Activated B cell treated with CpG ODN at 0.5 μM for 24 hours (primary cell): ENCODE measurements at regions of chr13 and their contacts with region 1.

Region 1: DNA sequence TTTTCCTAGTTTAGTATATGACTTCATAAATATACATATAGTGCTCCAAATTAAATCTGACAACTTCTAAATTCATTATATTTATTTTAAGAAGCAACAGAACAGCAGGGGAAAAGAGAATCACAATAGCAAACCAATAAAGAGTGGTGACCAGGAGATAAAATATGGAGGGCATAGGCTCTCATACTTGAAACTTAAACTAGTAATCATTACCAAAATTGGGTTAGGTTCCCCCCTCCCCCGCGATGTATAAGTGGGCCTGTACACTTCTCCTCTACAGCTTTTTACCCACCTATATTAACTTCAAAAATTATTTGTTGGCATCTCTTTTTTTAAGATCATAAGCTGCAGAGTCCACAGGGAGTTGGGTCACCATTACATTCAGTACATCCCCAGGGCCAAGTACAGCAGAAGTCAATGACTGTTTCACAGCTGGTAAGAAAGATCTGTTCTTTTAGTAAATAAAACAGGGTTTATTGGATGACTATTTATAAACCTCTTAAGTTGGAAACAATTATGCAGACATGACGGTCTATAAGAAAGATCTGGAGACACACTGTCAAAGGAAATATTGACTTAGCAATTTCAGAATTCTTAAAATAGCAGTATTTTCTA is 29.4 kb downstream of the KLF12 start:
- DNase-seq: no peak
- ATAC-seq: peak; percentile 58
- H3K4me3 Mint-ChIP-seq: no peak overlapping the region
- H3K27ac Mint-ChIP-seq: no peak overlapping the region
- H3K4me1 Mint-ChIP-seq: peaks cover 49% of the 10 kb centered on the region
- H3K27me3 Mint-ChIP-seq: no peaks in the 10 kb centered on the region
- CTCF ChIP-seq: no peak

Region 2: GRCh38 chr13:73898276-73898675 is 206.5 kb before region 1 on chr13:
- CTCF ChIA-PET with region 1: no interaction called
- POLR2A ChIA-PET with region 1: no interaction called
- intact Hi-C with region 1: no loop called
- DNase-seq: no peak
- ATAC-seq: peak; percentile 34
- H3K4me3 Mint-ChIP-seq: no peak overlapping the region
- H3K27ac Mint-ChIP-seq: no peak overlapping the region
- H3K4me1 Mint-ChIP-seq: peaks cover 39% of the 10 kb centered on the region
- H3K27me3 Mint-ChIP-seq: no peaks in the 10 kb centered on the region
- CTCF ChIP-seq: no peak

Region 3: DNA sequence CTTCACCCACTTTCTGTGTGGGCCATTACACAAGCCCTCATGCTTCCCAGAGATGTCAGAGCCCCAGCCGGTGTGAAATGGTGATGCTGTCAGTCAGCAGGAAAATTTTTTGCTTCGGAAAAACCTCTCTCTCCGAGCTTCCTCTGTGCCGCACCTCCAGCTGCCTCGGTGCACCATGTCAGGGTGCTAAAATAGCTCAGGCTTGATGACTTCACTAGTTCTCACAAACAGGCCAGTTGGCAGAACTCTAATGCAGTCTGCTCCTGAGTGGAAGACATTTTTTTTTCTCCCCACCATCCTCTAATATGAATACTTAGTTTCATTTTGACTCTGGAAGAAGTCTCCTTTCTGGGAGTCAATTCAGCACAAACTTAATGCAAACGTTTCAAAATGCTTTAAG is 41.8 kb before region 1 on chr13:
- CTCF ChIA-PET with region 1: no interaction called
- POLR2A ChIA-PET with region 1: no interaction called
- intact Hi-C with region 1: loop called (anchors 5 kb)
- DNase-seq: no peak
- ATAC-seq: peak; percentile 69
- H3K4me3 Mint-ChIP-seq: peak overlapping the region; percentile 77
- H3K27ac Mint-ChIP-seq: peak overlapping the region; percentile 88
- H3K4me1 Mint-ChIP-seq: peaks cover 86% of the 10 kb centered on the region
- H3K27me3 Mint-ChIP-seq: no peaks in the 10 kb centered on the region
- CTCF ChIP-seq: no peak

Region 4: DNA sequence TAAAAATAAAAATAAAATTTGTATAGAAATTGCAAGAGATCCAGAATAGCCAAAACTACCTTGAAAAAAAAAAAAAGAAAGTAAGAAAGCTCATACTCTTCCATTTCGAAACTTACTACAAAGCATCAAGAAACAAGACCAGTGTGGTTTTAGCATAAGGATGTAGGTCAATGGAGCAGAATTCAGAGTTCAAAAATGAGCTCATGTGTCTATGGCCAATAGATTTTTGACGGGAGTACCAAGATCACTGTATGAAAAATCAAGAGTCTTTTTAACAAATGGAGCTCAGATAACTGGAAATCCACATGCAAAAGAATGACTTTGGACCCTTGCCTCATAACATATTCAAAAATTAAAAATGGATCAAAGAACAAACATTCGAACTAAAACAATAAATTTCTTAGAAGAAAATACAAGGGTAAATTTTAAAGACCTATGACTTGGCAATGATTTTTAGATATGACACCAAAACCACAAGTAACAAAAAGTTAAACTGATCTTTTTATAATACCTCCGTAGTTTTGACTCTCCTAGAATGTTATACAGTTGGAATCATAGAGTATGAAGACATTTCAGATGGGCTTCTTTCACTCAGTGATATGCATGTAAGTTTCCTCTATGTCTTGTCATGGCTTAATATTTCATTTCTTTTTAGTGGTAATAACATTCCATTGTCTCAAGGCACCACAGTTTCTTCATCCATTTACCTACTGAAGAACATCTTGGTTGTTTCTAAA is 13.7 kb before region 1 on chr13:
- CTCF ChIA-PET with region 1: no interaction called
- POLR2A ChIA-PET with region 1: no interaction called
- intact Hi-C with region 1: loop called (anchors 1 kb)
- DNase-seq: no peak
- ATAC-seq: no peak
- H3K4me3 Mint-ChIP-seq: no peak overlapping the region
- H3K27ac Mint-ChIP-seq: peak overlapping the region; percentile 85
- H3K4me1 Mint-ChIP-seq: peaks cover 58% of the 10 kb centered on the region
- H3K27me3 Mint-ChIP-seq: no peaks in the 10 kb centered on the region
- CTCF ChIP-seq: no peak

Region 5: GRCh38 chr13:74641586-74641985 is 536.8 kb after region 1 on chr13:
- CTCF ChIA-PET with region 1: no interaction called
- POLR2A ChIA-PET with region 1: no interaction called
- intact Hi-C with region 1: no loop called
- DNase-seq: no peak
- ATAC-seq: no peak
- H3K4me3 Mint-ChIP-seq: no peak overlapping the region
- H3K27ac Mint-ChIP-seq: no peak overlapping the region
- H3K4me1 Mint-ChIP-seq: no peaks in the 10 kb centered on the region
- H3K27me3 Mint-ChIP-seq: no peaks in the 10 kb centered on the region
- CTCF ChIP-seq: no peak